ENCODE measurements at regions of chr1 and their contacts with region 1.

Region 1: DNA sequence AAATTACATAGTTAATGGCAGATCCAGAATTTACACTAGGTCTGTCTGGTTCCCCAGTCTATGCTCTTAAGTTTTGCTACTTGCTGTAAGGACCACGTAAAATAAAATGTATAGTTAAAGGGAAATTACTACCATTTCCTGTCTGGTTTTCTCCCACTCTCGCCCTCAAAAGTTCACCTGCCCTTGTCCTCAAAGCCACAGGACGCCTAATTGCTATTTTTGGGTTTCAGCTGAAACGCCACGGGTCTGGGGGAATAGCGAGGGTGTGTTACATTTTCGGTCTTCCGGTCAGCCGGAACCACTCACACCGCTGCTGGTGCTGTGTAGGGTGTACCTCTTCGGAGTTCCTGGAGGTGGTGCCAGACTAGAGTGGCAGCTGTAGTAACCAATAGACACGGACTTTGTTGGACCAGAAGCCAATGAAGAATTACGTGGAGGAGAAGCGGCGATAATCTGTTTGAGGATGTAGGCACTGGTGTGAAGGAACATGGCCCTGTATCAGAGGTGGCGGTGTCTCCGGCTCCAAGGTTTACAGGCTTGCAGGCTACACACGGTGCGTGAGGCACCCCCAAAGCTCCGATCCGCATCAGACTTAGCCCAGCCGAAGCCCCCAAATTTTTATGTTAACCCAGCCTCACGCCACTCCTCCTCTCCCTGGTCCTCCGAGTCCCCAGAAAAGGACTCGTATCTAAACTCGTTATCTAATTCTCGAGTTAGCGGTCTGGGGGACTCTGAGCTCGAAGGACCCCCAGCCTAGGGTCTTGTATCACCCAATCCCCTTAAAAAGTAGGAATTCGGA is at the start of gene TARS2:
- DNase-seq: peak; percentile 85 to 98
- ATAC-seq: peak; percentile 99 to 100 (median 100)
- H3K4me3 ChIP-seq: peak within 1 kb of the TSS; percentile 61 to 89 (median 79)
- H3K27ac ChIP-seq: peak within 1 kb of the TSS in 9 of 10 donors; percentile 57 to 89 (median 78)
- H3K4me1 ChIP-seq: peaks cover 6 to 15% (median 10%) of the 10 kb centered on the region in 9 donors
- H3K27me3 ChIP-seq: no peaks in the 10 kb centered on the region
- CTCF ChIP-seq: peak in 6 of 9 donors; percentile 23 to 43 (median 34)
- total RNA-seq, gene TARS2: 25.1 to 44.4 (median 37.0) TPM

Region 2: DNA sequence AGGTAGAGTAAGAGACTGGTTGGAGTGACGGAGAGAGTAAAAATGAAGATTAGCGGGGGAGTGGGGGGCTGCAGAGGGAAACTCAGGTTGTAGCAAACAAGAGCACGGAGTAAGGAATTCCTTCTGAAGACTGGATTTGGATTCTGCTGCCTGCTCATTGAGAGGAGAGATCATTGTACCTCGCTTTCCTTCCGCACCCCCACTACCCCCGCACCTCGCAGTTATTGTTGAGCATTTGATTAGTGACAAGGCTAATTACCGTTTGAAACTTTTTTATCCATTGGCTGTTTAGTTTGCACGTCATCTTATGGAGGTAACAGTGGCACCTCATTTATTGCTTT is 165.4 kb before region 1 on chr1:
- intact Hi-C with region 1: no loop called
- DNase-seq: no peak
- ATAC-seq: peak in 3 of 8 donors; percentile 3 to 16 (median 10)
- H3K4me3 ChIP-seq: peak overlapping the region; percentile 60 to 84 (median 75)
- H3K27ac ChIP-seq: peak overlapping the region; percentile 65 to 95 (median 90)
- H3K4me1 ChIP-seq: peaks cover 0 to 25% (median 13%) of the 10 kb centered on the region in 9 donors
- H3K27me3 ChIP-seq: no peaks in the 10 kb centered on the region
- CTCF ChIP-seq: no peak

Region 3: GRCh38 chr1:150515328-150516048 is 28.3 kb after region 1 on chr1 and contains the start of gene FALEC:
- intact Hi-C with region 1: loop called in 2 of 10 experiments (anchors 1 kb)
- DNase-seq: peak; percentile 96 to 98
- ATAC-seq: peak; percentile 98 to 99 (median 98)
- H3K4me3 ChIP-seq: peak within 1 kb of the TSS; percentile 52 to 78 (median 64)
- H3K27ac ChIP-seq: peak within 1 kb of the TSS; percentile 68 to 94 (median 85)
- H3K4me1 ChIP-seq: peaks cover 0 to 23% (median 16%) of the 10 kb centered on the region in 9 donors
- H3K27me3 ChIP-seq: no peaks in the 10 kb centered on the region
- CTCF ChIP-seq: no peak
- total RNA-seq, gene FALEC: 0.46 to 0.60 TPM in 2 of 10 donors, not detected in the others

Region 4: DNA sequence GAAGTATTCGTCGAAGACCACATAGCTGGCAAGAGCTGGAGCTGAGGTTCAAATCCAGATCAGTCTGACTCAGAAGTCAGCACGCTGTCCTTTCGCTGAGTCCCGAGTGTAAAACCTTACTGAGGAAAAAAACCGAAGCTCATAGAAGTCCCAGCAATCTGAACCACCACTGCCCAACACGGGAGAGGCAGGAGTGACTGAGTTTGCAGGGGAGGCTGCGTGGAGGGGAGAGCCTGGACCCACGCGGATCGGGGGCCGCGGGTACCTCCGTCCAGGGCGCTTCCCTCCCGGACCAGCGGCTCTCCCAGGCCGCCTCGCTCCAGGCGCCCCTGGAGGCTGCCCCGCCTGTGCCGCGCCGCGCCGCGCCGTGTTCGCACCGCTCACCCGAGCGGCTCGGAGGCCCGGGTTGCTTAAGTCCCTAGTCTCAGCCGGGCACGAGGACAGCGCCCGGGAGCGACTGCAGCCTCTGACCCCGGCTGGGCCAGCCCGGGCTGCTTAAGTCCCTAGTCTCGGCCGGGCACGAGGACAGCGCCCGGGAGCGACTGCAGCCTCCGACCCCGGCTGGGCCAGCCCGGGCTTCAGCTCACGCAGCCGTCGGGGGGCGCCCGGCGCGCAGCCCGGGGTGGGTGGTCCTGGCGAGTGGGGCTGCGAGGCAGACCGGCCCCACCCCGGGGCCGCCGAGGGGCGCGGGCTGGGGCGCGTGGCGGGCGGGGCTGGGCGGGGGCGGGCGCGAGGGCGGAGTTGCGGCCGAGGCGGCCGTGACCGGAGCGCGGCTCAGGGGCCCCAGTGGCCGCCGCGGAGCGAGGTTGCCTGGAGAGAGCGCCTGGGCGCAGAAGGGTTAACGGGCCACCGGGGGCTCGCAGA is 61.7 kb after region 1 on chr1 and contains the start of gene ADAMTSL4:
- intact Hi-C with region 1: no loop called
- DNase-seq: peak in 1 of 2 donors; percentile 65
- ATAC-seq: peak; percentile 20 to 63 (median 40)
- H3K4me3 ChIP-seq: peak within 1 kb of the TSS; percentile 47 to 69 (median 66)
- H3K27ac ChIP-seq: peak within 1 kb of the TSS; percentile 68 to 94 (median 88)
- H3K4me1 ChIP-seq: peaks cover 14 to 57% (median 38%) of the 10 kb centered on the region in 9 donors
- H3K27me3 ChIP-seq: no peaks in the 10 kb centered on the region
- CTCF ChIP-seq: peak in 4 of 9 donors; percentile 24 to 49 (median 40)
- total RNA-seq, gene ADAMTSL4: 22.2 to 86.5 (median 40.7) TPM

Measured in heart right ventricle (tissue), 16 donors.